ENCODE measurements at regions of chr20 and their contacts with region 1.

Region 1: GRCh38 chr20:58870239-58871014 is 17.9 kb downstream of the GNAS start:
- DNase-seq: peak in 7 of 9 experiments; percentile 27 to 75 (median 65)
- ATAC-seq: peak; percentile 81
- H3K4me3 ChIP-seq: no peak overlapping the region
- H3K4me3 Mint-ChIP-seq: no peak overlapping the region
- H3K27ac ChIP-seq: no peak overlapping the region
- H3K27ac Mint-ChIP-seq: no peak overlapping the region
- H3K4me1 ChIP-seq: no peaks in the 10 kb centered on the region
- H3K4me1 Mint-ChIP-seq: peaks cover 5% of the 10 kb centered on the region
- H3K27me3 ChIP-seq: no peaks in the 10 kb centered on the region
- H3K27me3 Mint-ChIP-seq: no peaks in the 10 kb centered on the region
- CTCF ChIP-seq: peak; percentile 73

Region 2: GRCh38 chr20:59455402-59456341 is 585.2 kb after region 1 on chr20:
- CTCF ChIA-PET with region 1: interaction called, 8 read pairs
- POLR2A ChIA-PET with region 1: no interaction called
- intact Hi-C with region 1: loop called in 1 of 2 experiments (anchors 1 kb)
- DNase-seq: peak in 2 of 9 experiments; percentile 20 to 28
- ATAC-seq: no peak
- H3K4me3 ChIP-seq: no peak overlapping the region
- H3K4me3 Mint-ChIP-seq: no peak overlapping the region
- H3K27ac ChIP-seq: no peak overlapping the region
- H3K27ac Mint-ChIP-seq: no peak overlapping the region
- H3K4me1 ChIP-seq: no peaks in the 10 kb centered on the region
- H3K4me1 Mint-ChIP-seq: peaks cover 3% of the 10 kb centered on the region
- H3K27me3 ChIP-seq: no peaks in the 10 kb centered on the region
- H3K27me3 Mint-ChIP-seq: peaks cover 16% of the 10 kb centered on the region
- CTCF ChIP-seq: peak; percentile 46

Region 3: GRCh38 chr20:60108397-60108796 is 1238.0 kb after region 1 on chr20:
- CTCF ChIA-PET with region 1: no interaction called
- POLR2A ChIA-PET with region 1: no interaction called
- intact Hi-C with region 1: no loop called
- DNase-seq: no peak
- ATAC-seq: no peak
- H3K4me3 ChIP-seq: no peak overlapping the region
- H3K4me3 Mint-ChIP-seq: no peak overlapping the region
- H3K27ac ChIP-seq: no peak overlapping the region
- H3K27ac Mint-ChIP-seq: no peak overlapping the region
- H3K4me1 ChIP-seq: no peaks in the 10 kb centered on the region
- H3K4me1 Mint-ChIP-seq: no peaks in the 10 kb centered on the region
- H3K27me3 ChIP-seq: no peaks in the 10 kb centered on the region
- H3K27me3 Mint-ChIP-seq: peaks cover 2% of the 10 kb centered on the region
- CTCF ChIP-seq: no peak

Region 4: GRCh38 chr20:60535211-60535610 is 1664.8 kb after region 1 on chr20:
- CTCF ChIA-PET with region 1: no interaction called
- POLR2A ChIA-PET with region 1: no interaction called
- intact Hi-C with region 1: no loop called
- DNase-seq: no peak
- ATAC-seq: no peak
- H3K4me3 ChIP-seq: no peak overlapping the region
- H3K4me3 Mint-ChIP-seq: no peak overlapping the region
- H3K27ac ChIP-seq: no peak overlapping the region
- H3K27ac Mint-ChIP-seq: no peak overlapping the region
- H3K4me1 ChIP-seq: no peaks in the 10 kb centered on the region
- H3K4me1 Mint-ChIP-seq: no peaks in the 10 kb centered on the region
- H3K27me3 ChIP-seq: no peaks in the 10 kb centered on the region
- H3K27me3 Mint-ChIP-seq: peaks cover 11% of the 10 kb centered on the region
- CTCF ChIP-seq: no peak

Measured in CD8-positive, alpha-beta T cell (primary cell).